ENCODE measurements at regions of chr14 and their contacts with region 1.

Region 1: GRCh38 chr14:34875031-34875922 is at the start of gene BAZ1A:
- DNase-seq: peak; percentile 47
- H3K4me3 Mint-ChIP-seq: peak within 1 kb of the TSS; percentile 100
- H3K27ac Mint-ChIP-seq: peak within 1 kb of the TSS; percentile 100
- H3K4me1 Mint-ChIP-seq: peaks cover 22% of the 10 kb centered on the region
- H3K27me3 Mint-ChIP-seq: no peaks in the 10 kb centered on the region
- total RNA-seq, gene BAZ1A: 81.7 and 85.7 TPM in 2 replicates

Region 2: GRCh38 chr14:34629657-34630529 is 245.4 kb before region 1 on chr14 and contains the start of gene SNX6:
- intact Hi-C with region 1: loop called (anchors 10 kb)
- DNase-seq: peak; percentile 78
- H3K4me3 Mint-ChIP-seq: peak within 1 kb of the TSS; percentile 95
- H3K27ac Mint-ChIP-seq: peak within 1 kb of the TSS; percentile 93
- H3K4me1 Mint-ChIP-seq: peaks cover 12% of the 10 kb centered on the region
- H3K27me3 Mint-ChIP-seq: peaks cover 10% of the 10 kb centered on the region
- total RNA-seq, gene SNX6: 66.6 and 67.0 TPM in 2 replicates

Region 3: DNA sequence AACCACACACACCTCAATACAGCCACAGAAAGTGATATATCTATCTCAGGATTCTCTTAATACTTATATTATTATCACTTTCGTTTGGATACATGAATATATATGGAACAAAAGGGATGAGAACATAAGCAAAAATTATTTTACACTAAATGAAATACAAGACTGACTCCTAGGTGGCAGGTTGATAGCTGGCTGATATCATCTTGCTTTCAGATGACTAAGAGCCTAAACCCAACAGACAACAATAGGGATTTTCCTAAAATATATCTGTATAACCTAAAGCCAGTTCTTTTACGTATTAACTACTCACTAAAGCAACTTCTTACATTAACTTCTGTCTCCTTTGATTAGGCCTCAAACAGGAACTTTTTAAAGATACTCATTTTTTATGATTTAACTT is 65.2 kb before region 1 on chr14:
- intact Hi-C with region 1: loop called (anchors 5 kb)
- DNase-seq: no peak
- H3K4me3 Mint-ChIP-seq: no peak overlapping the region
- H3K27ac Mint-ChIP-seq: peak overlapping the region; percentile 57
- H3K4me1 Mint-ChIP-seq: peaks cover 14% of the 10 kb centered on the region
- H3K27me3 Mint-ChIP-seq: no peaks in the 10 kb centered on the region

Region 4: DNA sequence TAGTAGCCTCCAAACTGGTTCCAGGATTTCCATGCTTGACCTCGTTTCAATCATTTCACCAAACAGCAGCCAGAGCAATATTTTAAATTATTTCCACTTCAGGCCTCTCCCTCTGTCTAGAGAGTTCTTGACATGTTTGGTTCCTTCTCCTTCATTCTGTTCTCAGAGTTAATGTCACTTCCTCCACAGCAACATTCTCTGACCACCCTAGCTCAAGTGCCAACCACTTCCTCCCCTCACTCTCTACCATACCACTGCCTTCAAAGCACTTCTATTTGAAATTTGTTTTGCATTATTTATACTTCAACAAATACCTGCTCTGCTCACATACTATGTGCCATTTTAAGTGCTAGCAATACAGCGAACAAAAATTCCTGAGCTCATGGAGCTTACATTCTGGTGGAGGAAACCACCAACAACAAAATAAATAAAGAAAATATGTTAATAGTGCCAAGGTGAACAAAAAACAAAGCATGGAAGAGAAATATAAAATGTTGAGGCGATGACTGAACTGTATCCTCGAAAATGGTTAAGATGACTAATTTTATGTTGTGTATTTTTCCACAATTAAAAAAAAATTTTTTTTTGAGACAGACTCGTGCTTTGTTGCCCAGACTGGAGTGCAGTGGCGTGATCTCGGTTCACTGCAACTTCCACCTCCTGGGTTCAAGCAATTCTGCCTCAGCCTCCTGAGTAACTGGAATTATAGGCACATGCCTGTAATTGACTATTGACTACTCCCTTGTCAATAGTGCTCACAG is 17.4 kb before region 1 on chr14:
- intact Hi-C with region 1: loop called (anchors 2 kb)
- DNase-seq: no peak
- H3K4me3 Mint-ChIP-seq: no peak overlapping the region
- H3K27ac Mint-ChIP-seq: peak overlapping the region; percentile 76
- H3K4me1 Mint-ChIP-seq: peaks cover 21% of the 10 kb centered on the region
- H3K27me3 Mint-ChIP-seq: no peaks in the 10 kb centered on the region

Region 5: GRCh38 chr14:34982417-34983147 is 107.3 kb after region 1 on chr14 and contains the start of gene SRP54:
- intact Hi-C with region 1: loop called (anchors 1 kb)
- DNase-seq: peak; percentile 100
- H3K4me3 Mint-ChIP-seq: no peak within 1 kb of the TSS
- H3K27ac Mint-ChIP-seq: no peak within 1 kb of the TSS
- H3K4me1 Mint-ChIP-seq: peaks cover 20% of the 10 kb centered on the region
- H3K27me3 Mint-ChIP-seq: no peaks in the 10 kb centered on the region
- total RNA-seq, gene SRP54: 78.9 and 82.4 TPM in 2 replicates

Region 6: DNA sequence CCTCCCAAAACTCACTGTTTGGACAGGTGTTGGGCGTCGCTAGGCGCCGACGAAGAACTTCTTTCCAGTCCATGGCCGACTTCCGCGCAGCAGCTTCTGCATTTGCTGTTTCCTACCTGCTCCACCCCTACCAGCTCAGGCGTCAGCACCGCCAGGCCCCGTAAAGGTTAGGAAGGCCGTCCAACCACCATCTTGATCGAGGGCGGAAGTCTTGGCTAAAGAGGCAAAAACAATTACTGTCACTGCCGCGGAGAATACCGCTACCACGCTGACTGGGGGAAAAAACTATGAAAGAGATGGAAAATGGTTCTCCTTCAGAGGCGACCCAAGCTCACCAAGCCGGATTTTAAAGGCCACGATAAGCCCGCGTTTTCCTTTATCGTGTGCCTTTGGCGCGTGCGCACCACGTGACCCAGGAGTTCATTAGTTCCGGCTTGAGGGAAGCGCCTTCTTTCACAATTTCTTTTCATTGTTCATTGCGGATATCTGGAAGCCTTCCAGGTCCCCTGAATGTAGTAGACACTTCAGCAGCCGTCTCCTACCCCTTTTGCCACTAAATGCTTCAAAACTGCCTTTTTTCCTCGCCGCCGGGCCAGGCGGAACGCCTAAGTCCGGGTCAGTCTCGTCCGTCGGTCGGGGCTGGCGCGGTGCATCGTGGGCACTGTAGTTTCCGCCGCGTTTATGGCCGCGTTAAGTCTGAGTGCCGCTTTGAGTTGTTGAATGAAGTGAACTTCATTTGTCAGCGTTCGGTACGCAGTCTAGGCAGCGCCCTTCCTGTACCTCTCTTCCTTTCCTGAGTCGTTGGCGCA is 246.8 kb after region 1 on chr14 and contains the starts of genes PPP2R3C and PRORP:
- intact Hi-C with region 1: loop called (anchors 5 kb)
- DNase-seq: peak; percentile 88
- H3K4me3 Mint-ChIP-seq: peak within 1 kb of the TSS; percentile 96
- H3K27ac Mint-ChIP-seq: peak within 1 kb of the TSS; percentile 100
- H3K4me1 Mint-ChIP-seq: peaks cover 41% of the 10 kb centered on the region
- H3K27me3 Mint-ChIP-seq: no peaks in the 10 kb centered on the region
- total RNA-seq, gene PPP2R3C: 48.1 and 49.7 TPM in 2 replicates
- total RNA-seq, gene PRORP: 37.0 and 41.3 TPM in 2 replicates

Measured in activated T-helper 2 cell treated with anti-CD3 and anti-CD28 coated beads, Interferon-gamma antibody, Interleukin-2, Interleukin-4, amounts not matched to agents 10 μg/mL and 5 μg/mL and 100 μg/mL, durations not matched to agents 14 hours and 24 hours and 36 hours (primary cell).